OCI-LY7 (cell line): ENCODE measurements at regions of chr2 and their contacts with region 1.

Region 1: GRCh38 chr2:204177977-204178540 is 241.5 kb downstream of the ICOS start:
- DNase-seq: peak; percentile 59
- H3K4me3 ChIP-seq: no peak overlapping the region
- H3K27ac ChIP-seq: no peak overlapping the region
- H3K4me1 ChIP-seq: no peaks in the 10 kb centered on the region
- CTCF ChIP-seq: peak; percentile 90

Region 2: DNA sequence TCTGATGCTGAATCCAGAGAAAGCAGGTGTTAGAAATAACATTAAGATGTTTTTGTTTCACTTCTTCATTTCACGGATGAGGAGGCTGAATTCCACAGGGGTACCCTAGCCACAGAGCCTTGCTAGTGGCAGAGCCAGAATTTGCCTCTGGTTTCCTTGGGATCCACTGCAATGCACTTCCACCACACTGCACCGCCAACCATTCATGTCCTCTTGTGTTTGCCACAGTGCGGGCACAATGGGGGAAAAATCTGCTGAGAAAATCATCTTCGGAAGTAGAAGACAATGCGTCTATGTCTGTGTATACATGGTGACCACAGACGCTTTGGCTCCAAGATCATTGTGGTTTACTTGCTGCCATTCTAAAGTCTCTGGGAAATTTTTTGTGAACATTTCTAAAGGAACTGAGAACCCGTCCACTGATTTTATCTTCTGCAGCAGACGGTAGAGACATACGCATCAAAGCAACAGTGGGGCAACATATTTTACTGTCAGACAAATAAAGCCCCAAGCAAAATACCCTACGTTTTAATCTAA is 226.6 kb before region 1 on chr2:
- CTCF ChIA-PET with region 1: no interaction called
- POLR2A ChIA-PET with region 1: no interaction called
- intact Hi-C with region 1: no loop called
- DNase-seq: peak; percentile 7
- H3K4me3 ChIP-seq: no peak overlapping the region
- H3K27ac ChIP-seq: no peak overlapping the region
- H3K4me1 ChIP-seq: no peaks in the 10 kb centered on the region
- CTCF ChIP-seq: no peak

Region 3: GRCh38 chr2:204024503-204024902 is 153.6 kb before region 1 on chr2:
- CTCF ChIA-PET with region 1: no interaction called
- POLR2A ChIA-PET with region 1: no interaction called
- intact Hi-C with region 1: loop called (anchors 2 kb)
- DNase-seq: peak; percentile 68
- H3K4me3 ChIP-seq: no peak overlapping the region
- H3K27ac ChIP-seq: no peak overlapping the region
- H3K4me1 ChIP-seq: peaks cover 22% of the 10 kb centered on the region
- CTCF ChIP-seq: peak; percentile 88

Region 4: GRCh38 chr2:204108330-204108751 is 69.7 kb before region 1 on chr2:
- CTCF ChIA-PET with region 1: no interaction called
- POLR2A ChIA-PET with region 1: no interaction called
- intact Hi-C with region 1: loop called (anchors 2 kb)
- DNase-seq: peak; percentile 49
- H3K4me3 ChIP-seq: no peak overlapping the region
- H3K27ac ChIP-seq: no peak overlapping the region
- H3K4me1 ChIP-seq: peaks cover 14% of the 10 kb centered on the region
- CTCF ChIP-seq: peak; percentile 66

Region 5: GRCh38 chr2:204145263-204145751 is 32.8 kb before region 1 on chr2:
- CTCF ChIA-PET with region 1: interaction called, 3 read pairs
- POLR2A ChIA-PET with region 1: no interaction called
- intact Hi-C with region 1: loop called (anchors 1 kb)
- DNase-seq: peak; percentile 81
- H3K4me3 ChIP-seq: peak overlapping the region; percentile 37
- H3K27ac ChIP-seq: no peak overlapping the region
- H3K4me1 ChIP-seq: no peaks in the 10 kb centered on the region
- CTCF ChIP-seq: peak; percentile 100

Region 6: GRCh38 chr2:204583773-204584172 is 405.7 kb after region 1 on chr2:
- CTCF ChIA-PET with region 1: no interaction called
- POLR2A ChIA-PET with region 1: no interaction called
- intact Hi-C with region 1: no loop called
- DNase-seq: no peak
- H3K4me3 ChIP-seq: no peak overlapping the region
- H3K27ac ChIP-seq: no peak overlapping the region
- H3K4me1 ChIP-seq: no peaks in the 10 kb centered on the region
- CTCF ChIP-seq: no peak

Region 7: DNA sequence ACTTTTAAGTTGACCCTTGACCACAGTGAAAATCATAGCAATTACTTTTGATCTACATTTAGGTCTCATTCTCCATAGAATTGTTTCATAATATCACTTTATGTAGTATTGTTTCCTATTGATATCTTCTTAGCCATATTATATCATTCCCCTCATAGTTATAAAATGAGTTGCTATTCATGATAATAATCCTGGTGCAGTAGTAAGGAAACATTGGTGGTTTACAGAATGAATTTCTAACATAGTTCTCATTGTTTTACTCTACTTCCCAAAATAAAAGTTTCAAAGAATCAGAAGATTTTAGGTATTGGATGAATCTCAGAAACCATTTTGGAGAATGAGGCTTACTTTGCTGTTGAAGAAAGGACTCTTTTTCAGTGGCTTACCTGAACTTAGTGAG is 613.2 kb after region 1 on chr2:
- CTCF ChIA-PET with region 1: no interaction called
- POLR2A ChIA-PET with region 1: no interaction called
- intact Hi-C with region 1: no loop called
- DNase-seq: no peak
- H3K4me3 ChIP-seq: no peak overlapping the region
- H3K27ac ChIP-seq: no peak overlapping the region
- H3K4me1 ChIP-seq: no peaks in the 10 kb centered on the region
- CTCF ChIP-seq: no peak